Naive thymus-derived CD4-positive, alpha-beta T cell (primary cell): ENCODE measurements at regions of chr2 and their contacts with region 1.

Region 1: DNA sequence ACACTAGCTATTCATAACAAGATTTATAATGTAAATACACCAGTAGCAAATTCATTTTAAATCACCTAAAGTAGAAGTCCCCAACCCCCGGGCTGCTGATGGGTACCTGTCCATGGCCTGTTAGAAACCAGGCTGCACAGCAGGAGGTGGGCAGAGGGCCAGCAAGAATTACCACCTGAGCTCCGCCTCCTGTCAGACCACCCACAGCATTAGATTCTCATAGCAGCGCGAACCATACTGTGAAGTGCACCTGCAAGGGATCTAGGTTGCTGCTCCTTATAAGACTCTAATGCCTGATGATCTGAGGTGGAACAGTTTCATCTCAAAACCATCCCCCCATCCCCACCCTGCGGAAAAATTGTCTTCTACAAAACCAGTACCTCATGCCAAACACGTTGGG is 71.3 kb downstream of the KANSL1L start:
- DNase-seq: no peak
- ATAC-seq: no peak
- H3K4me3 ChIP-seq: no peak overlapping the region
- H3K4me3 Mint-ChIP-seq: no peak overlapping the region
- H3K27ac ChIP-seq: no peak overlapping the region
- H3K27ac Mint-ChIP-seq: no peak overlapping the region
- H3K4me1 ChIP-seq: no peaks in the 10 kb centered on the region
- H3K4me1 Mint-ChIP-seq: peaks cover 0 to 2% (median 0%) of the 10 kb centered on the region in 7 donors
- H3K27me3 ChIP-seq: no peaks in the 10 kb centered on the region
- H3K27me3 Mint-ChIP-seq: no peaks in the 10 kb centered on the region

Region 2: DNA sequence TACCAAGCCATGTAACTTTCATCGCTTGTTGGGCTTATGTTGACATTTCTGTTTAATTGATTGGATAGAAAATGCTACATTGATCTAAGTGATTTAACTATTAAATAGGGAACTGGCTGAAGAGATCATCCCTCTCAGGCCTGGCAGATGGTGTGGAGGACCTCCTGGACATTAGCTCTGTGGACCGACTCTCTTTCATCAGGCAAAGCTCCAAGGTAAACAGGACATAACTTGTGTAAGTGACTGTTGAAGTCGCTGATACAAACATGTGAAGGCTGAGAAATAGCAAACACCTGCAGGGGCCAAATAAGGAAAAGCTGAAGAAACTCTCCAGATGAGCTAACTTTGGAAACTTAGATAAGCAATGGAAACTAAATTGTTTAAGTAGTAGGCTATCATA is 259.5 kb before region 1 on chr2:
- CTCF ChIA-PET with region 1: no interaction called
- POLR2A ChIA-PET with region 1: no interaction called
- intact Hi-C with region 1: no loop called
- DNase-seq: no peak
- ATAC-seq: no peak
- H3K4me3 ChIP-seq: no peak overlapping the region
- H3K4me3 Mint-ChIP-seq: no peak overlapping the region
- H3K27ac ChIP-seq: no peak overlapping the region
- H3K27ac Mint-ChIP-seq: no peak overlapping the region
- H3K4me1 ChIP-seq: no peaks in the 10 kb centered on the region
- H3K4me1 Mint-ChIP-seq: no peaks in the 10 kb centered on the region
- H3K27me3 ChIP-seq: no peaks in the 10 kb centered on the region
- H3K27me3 Mint-ChIP-seq: peaks cover 0 to 10% (median 0%) of the 10 kb centered on the region in 5 donors

Region 3: GRCh38 chr2:210132239-210132638 is 32.3 kb after region 1 on chr2:
- CTCF ChIA-PET with region 1: no interaction called
- POLR2A ChIA-PET with region 1: no interaction called
- intact Hi-C with region 1: loop called in 1 of 2 experiments (anchors 5 kb)
- DNase-seq: no peak
- ATAC-seq: no peak
- H3K4me3 ChIP-seq: no peak overlapping the region
- H3K4me3 Mint-ChIP-seq: no peak overlapping the region
- H3K27ac ChIP-seq: no peak overlapping the region
- H3K27ac Mint-ChIP-seq: peak overlapping the region in 1 of 9 donors; percentile 54
- H3K4me1 ChIP-seq: no peaks in the 10 kb centered on the region
- H3K4me1 Mint-ChIP-seq: peaks cover 3 to 24% (median 7%) of the 10 kb centered on the region in 7 donors
- H3K27me3 ChIP-seq: no peaks in the 10 kb centered on the region
- H3K27me3 Mint-ChIP-seq: no peaks in the 10 kb centered on the region